ENCODE measurements at regions of chr15 and their contacts with region 1.

Region 1: GRCh38 chr15:23642413-23643044 is 5.1 kb downstream of the MAGEL2 start:
- DNase-seq: peak; percentile 71 to 75
- H3K4me3 ChIP-seq: no peak overlapping the region
- H3K4me3 Mint-ChIP-seq: no peak overlapping the region
- H3K27ac Mint-ChIP-seq: no peak overlapping the region
- H3K4me1 ChIP-seq: no peaks in the 10 kb centered on the region
- H3K4me1 Mint-ChIP-seq: no peaks in the 10 kb centered on the region
- H3K27me3 ChIP-seq: no peaks in the 10 kb centered on the region
- H3K27me3 Mint-ChIP-seq: peaks cover 2% of the 10 kb centered on the region
- CTCF ChIP-seq: peak; percentile 76 to 91

Region 2: GRCh38 chr15:23483821-23484299 is 158.7 kb before region 1 on chr15:
- CTCF ChIA-PET with region 1: no interaction called
- POLR2A ChIA-PET with region 1: no interaction called
- intact Hi-C with region 1: no loop called
- DNase-seq: peak in 1 of 2 experiments; percentile 28
- H3K4me3 ChIP-seq: no peak overlapping the region
- H3K4me3 Mint-ChIP-seq: no peak overlapping the region
- H3K27ac Mint-ChIP-seq: no peak overlapping the region
- H3K4me1 ChIP-seq: peaks cover 7% of the 10 kb centered on the region
- H3K4me1 Mint-ChIP-seq: no peaks in the 10 kb centered on the region
- H3K27me3 ChIP-seq: no peaks in the 10 kb centered on the region
- H3K27me3 Mint-ChIP-seq: no peaks in the 10 kb centered on the region
- CTCF ChIP-seq: no peak

Region 3: DNA sequence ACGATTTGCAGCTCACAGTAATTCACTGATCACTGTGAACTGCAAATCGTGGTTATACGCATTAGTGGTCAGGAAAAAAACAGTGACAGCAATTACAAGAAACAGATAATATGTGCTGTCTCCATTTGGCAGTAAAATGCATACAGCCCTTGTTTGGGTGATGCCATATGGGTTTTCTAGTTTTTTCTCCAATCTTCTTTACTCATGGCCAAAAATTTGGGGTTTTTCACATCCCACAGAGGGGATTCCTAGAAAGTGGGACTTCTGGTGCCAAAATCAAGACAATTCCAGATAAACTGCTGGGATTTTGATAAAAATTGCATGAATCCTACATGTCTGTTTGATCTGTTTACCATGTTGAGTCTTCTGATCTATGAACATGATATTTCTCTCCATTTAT is 29.0 kb after region 1 on chr15:
- CTCF ChIA-PET with region 1: no interaction called
- POLR2A ChIA-PET with region 1: no interaction called
- intact Hi-C with region 1: no loop called
- DNase-seq: no peak
- H3K4me3 ChIP-seq: no peak overlapping the region
- H3K4me3 Mint-ChIP-seq: no peak overlapping the region
- H3K27ac Mint-ChIP-seq: no peak overlapping the region
- H3K4me1 ChIP-seq: no peaks in the 10 kb centered on the region
- H3K4me1 Mint-ChIP-seq: no peaks in the 10 kb centered on the region
- H3K27me3 ChIP-seq: no peaks in the 10 kb centered on the region
- H3K27me3 Mint-ChIP-seq: peaks cover 3% of the 10 kb centered on the region
- CTCF ChIP-seq: no peak

Region 4: GRCh38 chr15:23760024-23760423 is 117.5 kb after region 1 on chr15:
- CTCF ChIA-PET with region 1: no interaction called
- POLR2A ChIA-PET with region 1: no interaction called
- intact Hi-C with region 1: loop called (anchors 1 kb)
- DNase-seq: peak in 1 of 2 experiments; percentile 8
- H3K4me3 ChIP-seq: no peak overlapping the region
- H3K4me3 Mint-ChIP-seq: no peak overlapping the region
- H3K27ac Mint-ChIP-seq: no peak overlapping the region
- H3K4me1 ChIP-seq: no peaks in the 10 kb centered on the region
- H3K4me1 Mint-ChIP-seq: no peaks in the 10 kb centered on the region
- H3K27me3 ChIP-seq: no peaks in the 10 kb centered on the region
- H3K27me3 Mint-ChIP-seq: peaks cover 6% of the 10 kb centered on the region
- CTCF ChIP-seq: peak in 1 of 2 experiments; percentile 7

Region 5: DNA sequence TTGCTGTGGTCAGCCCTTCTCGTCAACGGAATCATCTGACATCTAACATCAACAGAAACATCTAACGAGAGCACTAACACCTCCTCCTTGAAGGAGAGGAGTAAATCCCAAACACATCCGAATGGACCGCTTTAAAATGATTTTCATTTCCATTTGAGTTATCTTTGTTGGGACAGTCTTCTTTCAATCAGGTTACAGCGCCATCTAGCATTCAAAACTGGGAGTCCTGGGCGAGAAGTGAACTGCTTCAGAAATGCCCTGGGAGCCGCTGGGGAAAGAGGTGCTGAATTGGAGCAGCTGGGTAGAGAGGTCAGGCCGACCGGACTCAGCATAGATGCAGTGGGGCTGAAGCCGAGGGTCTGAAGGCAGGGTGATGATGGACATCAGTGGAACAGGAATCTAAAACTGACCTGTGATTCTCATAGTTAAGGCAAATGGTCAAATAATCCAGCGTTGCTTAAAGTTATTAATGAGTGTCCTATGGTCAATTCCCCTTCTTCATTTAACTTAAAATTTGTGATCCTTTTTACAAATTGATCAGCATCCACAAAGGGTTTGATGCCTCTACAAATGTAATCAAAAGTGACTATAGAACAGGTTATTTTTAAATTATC is 214.6 kb after region 1 on chr15:
- CTCF ChIA-PET with region 1: interaction called, 7 read pairs
- POLR2A ChIA-PET with region 1: no interaction called
- intact Hi-C with region 1: loop called (anchors 1 kb)
- DNase-seq: peak; percentile 58 to 64
- H3K4me3 ChIP-seq: no peak overlapping the region
- H3K4me3 Mint-ChIP-seq: no peak overlapping the region
- H3K27ac Mint-ChIP-seq: no peak overlapping the region
- H3K4me1 ChIP-seq: no peaks in the 10 kb centered on the region
- H3K4me1 Mint-ChIP-seq: no peaks in the 10 kb centered on the region
- H3K27me3 ChIP-seq: no peaks in the 10 kb centered on the region
- H3K27me3 Mint-ChIP-seq: peaks cover 13% of the 10 kb centered on the region
- CTCF ChIP-seq: peak; percentile 57 to 71

Region 6: GRCh38 chr15:23866832-23867231 is 224.3 kb after region 1 on chr15:
- CTCF ChIA-PET with region 1: no interaction called
- POLR2A ChIA-PET with region 1: no interaction called
- intact Hi-C with region 1: loop called (anchors 1 kb)
- DNase-seq: peak in 1 of 2 experiments; percentile 37
- H3K4me3 ChIP-seq: no peak overlapping the region
- H3K4me3 Mint-ChIP-seq: no peak overlapping the region
- H3K27ac Mint-ChIP-seq: no peak overlapping the region
- H3K4me1 ChIP-seq: no peaks in the 10 kb centered on the region
- H3K4me1 Mint-ChIP-seq: no peaks in the 10 kb centered on the region
- H3K27me3 ChIP-seq: no peaks in the 10 kb centered on the region
- H3K27me3 Mint-ChIP-seq: peaks cover 4% of the 10 kb centered on the region
- CTCF ChIP-seq: peak; percentile 40 to 48

Region 7: GRCh38 chr15:23877502-23878412 is 235.2 kb after region 1 on chr15:
- CTCF ChIA-PET with region 1: interaction called, 3 read pairs
- POLR2A ChIA-PET with region 1: no interaction called
- intact Hi-C with region 1: loop called (anchors 1 kb)
- DNase-seq: peak; percentile 60 to 74
- H3K4me3 ChIP-seq: no peak overlapping the region
- H3K4me3 Mint-ChIP-seq: no peak overlapping the region
- H3K27ac Mint-ChIP-seq: no peak overlapping the region
- H3K4me1 ChIP-seq: no peaks in the 10 kb centered on the region
- H3K4me1 Mint-ChIP-seq: peaks cover 7% of the 10 kb centered on the region
- H3K27me3 ChIP-seq: no peaks in the 10 kb centered on the region
- H3K27me3 Mint-ChIP-seq: peaks cover 4% of the 10 kb centered on the region
- CTCF ChIP-seq: peak; percentile 59 to 73